ENCODE measurements at regions of chr1 and their contacts with region 1.

Region 1: DNA sequence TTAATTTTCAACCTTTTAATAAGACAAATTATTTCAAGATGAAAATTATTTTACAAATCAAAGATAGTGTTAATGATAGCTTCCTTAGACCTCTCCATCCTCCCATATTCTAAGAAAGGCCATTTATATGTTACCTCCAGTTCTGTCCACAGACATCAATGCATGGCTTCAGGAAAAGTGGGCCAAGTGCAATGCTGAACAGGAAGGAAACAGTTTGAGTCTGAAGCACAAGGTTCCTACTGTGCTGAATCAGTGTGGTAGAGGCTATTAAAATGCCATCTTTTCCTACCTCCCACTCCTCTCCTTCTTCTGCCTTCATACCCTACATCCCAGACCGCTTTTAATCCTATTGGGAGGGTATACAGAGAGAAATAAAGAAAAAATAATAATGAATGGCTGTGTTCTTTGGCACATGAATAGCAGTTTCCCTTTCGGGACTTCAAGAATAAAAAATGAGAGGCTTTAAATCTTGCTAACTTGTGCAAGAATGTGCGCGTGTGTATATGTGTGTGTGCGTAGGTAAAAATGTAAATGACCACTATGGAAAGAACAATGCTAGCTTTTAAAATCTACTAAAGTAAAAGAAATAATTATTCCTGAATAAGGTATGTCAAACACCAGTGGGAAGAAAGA is 62.6 kb upstream of the C1orf105 start:
- DNase-seq: no peak
- ATAC-seq: no peak
- H3K4me3 ChIP-seq: no peak overlapping the region
- H3K4me1 ChIP-seq: peaks cover 46% of the 10 kb centered on the region
- CTCF ChIP-seq: no peak

Region 2: DNA sequence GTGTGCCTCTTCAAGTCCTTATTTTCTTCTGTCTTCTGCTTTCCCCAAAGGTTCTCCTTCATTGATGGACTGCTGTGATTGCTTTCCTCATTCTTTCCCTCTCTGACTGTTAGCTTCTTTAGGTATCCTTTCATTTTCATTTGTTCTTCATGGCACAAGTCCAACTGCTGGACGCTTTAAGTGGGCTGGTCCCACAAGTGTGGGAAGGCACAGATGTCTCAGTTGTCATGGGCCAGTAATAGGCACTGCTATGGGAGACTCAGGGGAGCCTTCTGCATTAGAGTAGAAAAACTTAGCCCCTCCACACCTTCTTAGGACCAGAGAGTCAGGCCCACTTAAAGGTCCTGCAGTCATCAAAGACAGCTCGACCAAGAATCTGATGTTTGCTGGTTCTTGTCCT is 59.7 kb before region 1 on chr1:
- intact Hi-C with region 1: no loop called
- DNase-seq: no peak
- ATAC-seq: no peak
- H3K4me3 ChIP-seq: no peak overlapping the region
- H3K4me1 ChIP-seq: no peaks in the 10 kb centered on the region
- CTCF ChIP-seq: no peak

Region 3: DNA sequence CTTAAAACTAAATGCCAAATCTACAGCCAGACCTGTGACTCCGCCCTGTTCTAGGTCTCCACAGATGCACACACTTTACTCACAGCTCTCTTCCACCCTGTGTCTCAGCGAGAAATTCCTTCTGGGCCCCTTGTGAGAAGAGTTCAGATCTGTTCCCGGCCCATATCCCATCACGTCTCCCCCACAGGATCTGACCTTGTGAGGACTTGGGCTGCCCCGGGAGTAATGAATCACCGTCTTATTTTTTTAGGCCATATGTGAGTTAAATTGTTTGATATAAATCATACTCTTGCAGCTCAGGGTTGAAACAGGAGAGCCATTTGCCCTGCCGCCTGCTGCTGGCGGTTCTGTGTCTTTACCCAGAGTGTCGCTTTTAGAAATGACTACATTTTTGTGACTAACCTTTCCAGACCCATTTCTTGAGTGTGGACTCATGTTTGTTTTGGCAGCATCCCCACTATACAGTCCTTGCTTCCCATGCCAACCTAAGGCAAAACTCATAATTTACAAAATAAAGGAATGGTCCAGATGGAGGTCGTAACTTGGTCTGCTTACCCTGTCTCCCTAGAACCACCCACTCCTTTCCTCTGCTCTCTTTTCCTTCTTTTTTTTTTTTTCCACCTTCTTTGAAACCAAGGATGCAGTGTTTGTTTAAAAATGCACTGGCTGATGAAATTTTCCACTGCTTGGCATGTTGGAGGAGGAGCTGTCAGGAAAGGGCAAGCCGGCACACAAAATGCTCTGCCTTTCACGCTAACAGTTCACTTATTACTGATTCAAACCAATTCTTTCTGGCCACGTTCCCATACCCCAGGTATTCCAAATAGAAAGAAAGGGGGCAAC is 35.4 kb before region 1 on chr1:
- intact Hi-C with region 1: loop called in 1 of 2 experiments (anchors 5 kb)
- DNase-seq: no peak
- ATAC-seq: peak; percentile 18
- H3K4me3 ChIP-seq: no peak overlapping the region
- H3K4me1 ChIP-seq: no peaks in the 10 kb centered on the region
- CTCF ChIP-seq: no peak

Region 4: GRCh38 chr1:172515927-172516326 is 158.1 kb after region 1 on chr1:
- intact Hi-C with region 1: no loop called
- DNase-seq: no peak
- ATAC-seq: no peak
- H3K4me3 ChIP-seq: no peak overlapping the region
- H3K4me1 ChIP-seq: no peaks in the 10 kb centered on the region
- CTCF ChIP-seq: no peak